HEK293 (cell line): ENCODE measurements at regions of chr7 and their contacts with region 1.

Region 1: DNA sequence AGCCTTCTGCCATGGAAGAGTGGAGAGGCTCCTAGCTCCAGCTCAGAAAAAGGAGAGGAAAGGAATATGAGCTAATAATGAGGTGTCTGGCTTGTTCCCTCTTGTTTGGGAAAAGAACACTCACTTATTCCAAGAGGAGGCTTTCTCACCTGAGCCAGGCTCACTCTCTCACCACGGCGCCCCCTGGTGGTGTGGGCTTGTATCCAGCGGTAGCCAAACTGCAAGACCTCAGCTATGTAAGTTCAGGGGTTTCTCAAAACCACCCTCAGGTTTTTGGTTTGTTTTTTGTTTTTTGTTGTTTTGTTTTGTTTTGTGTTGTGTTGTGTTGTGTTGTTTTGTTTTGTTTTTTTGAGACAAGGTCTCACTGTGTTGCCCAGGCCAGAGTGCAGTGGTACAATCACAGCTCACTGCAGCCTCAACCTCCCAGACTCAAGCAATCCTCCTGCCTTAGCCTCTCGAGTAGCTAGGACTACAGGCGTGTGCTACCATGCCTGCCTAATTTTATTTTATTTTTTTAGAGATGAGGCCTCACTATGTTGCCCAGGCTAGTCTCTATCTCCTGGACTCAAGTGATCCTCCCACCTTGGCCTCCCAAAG is 124.0 kb downstream of the TMEM130 start:
- H3K4me3 ChIP-seq: no peak overlapping the region
- H3K27ac ChIP-seq: no peak overlapping the region
- H3K4me1 ChIP-seq: no peaks in the 10 kb centered on the region
- CTCF ChIP-seq: peak; percentile 72

Region 2: GRCh38 chr7:98434095-98434494 is 311.7 kb before region 1 on chr7:
- CTCF ChIA-PET with region 1: interaction called, 36 read pairs
- POLR2A ChIA-PET with region 1: no interaction called
- H3K4me3 ChIP-seq: no peak overlapping the region
- H3K27ac ChIP-seq: no peak overlapping the region
- H3K4me1 ChIP-seq: no peaks in the 10 kb centered on the region
- CTCF ChIP-seq: no peak

Region 3: DNA sequence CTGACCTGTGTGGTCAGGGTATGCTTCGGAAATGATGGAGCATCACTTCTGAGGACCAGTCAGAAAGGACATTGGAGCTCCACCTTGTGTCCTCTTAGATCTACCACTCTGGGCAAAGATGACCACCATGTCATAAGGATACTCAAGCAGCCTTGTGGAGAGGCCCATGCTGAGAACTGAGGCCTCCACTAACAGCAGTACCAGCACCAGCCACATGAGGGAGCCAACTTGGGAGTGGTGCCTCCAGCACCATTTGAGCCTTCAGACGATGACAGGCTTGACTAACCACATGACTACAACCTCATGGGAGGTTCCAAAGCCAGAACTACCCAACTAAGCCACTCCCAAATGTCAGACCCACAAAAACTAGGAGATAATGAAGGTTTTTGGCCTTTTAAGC is 12.8 kb before region 1 on chr7:
- CTCF ChIA-PET with region 1: interaction called, 25 read pairs
- POLR2A ChIA-PET with region 1: no interaction called
- H3K4me3 ChIP-seq: no peak overlapping the region
- H3K27ac ChIP-seq: no peak overlapping the region
- H3K4me1 ChIP-seq: no peaks in the 10 kb centered on the region
- CTCF ChIP-seq: peak; percentile 50; the same call in 1 of the 2 replicates

Region 4: DNA sequence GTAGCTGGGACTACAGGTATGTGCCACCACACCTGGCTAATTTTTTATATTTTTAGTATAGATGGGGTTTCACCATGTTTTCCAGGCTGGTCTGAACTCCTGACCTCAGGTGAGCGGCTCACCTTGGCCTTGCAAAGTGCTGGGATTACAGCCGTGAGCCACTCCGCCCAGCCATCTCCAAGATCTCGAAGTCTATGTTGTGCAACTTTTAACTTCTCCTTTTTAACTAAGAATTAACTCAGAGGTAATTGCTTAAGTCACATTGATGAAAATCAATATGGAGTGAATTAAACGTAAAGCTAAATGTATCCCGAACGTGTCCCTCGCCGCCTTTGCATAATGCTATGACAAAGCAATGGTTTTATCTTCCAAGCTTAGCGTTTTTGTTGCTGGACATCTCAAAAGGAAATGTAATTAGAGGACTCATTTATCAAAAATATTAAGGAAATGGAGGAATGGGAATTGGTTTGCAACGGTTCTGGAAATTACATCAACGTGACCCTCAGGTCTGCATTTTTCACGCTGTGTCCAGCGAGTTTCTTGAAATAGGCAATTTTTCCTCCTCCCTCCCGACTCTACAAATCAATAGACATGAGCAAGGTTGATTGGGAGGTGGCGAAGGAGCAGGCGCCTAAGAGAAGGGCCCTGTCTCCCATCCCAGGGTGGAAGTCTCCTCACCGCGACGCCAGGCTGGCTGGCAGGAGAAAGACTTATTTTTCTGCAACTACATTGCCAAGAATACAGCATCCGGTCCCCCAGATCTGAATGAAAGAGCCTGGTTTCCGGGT is 34.2 kb after region 1 on chr7:
- CTCF ChIA-PET with region 1: interaction called, 14 read pairs
- POLR2A ChIA-PET with region 1: interaction called, 4 read pairs
- H3K4me3 ChIP-seq: no peak overlapping the region
- H3K27ac ChIP-seq: no peak overlapping the region
- H3K4me1 ChIP-seq: no peaks in the 10 kb centered on the region
- CTCF ChIP-seq: no peak

Region 5: GRCh38 chr7:98841179-98841997 is 95.6 kb after region 1 on chr7:
- CTCF ChIA-PET with region 1: interaction called, 26 read pairs
- POLR2A ChIA-PET with region 1: no interaction called
- H3K4me3 ChIP-seq: no peak overlapping the region
- H3K27ac ChIP-seq: no peak overlapping the region
- H3K4me1 ChIP-seq: peaks cover 13% of the 10 kb centered on the region; the same call in 1 of the 2 replicates
- CTCF ChIP-seq: peak; percentile 97

Region 6: DNA sequence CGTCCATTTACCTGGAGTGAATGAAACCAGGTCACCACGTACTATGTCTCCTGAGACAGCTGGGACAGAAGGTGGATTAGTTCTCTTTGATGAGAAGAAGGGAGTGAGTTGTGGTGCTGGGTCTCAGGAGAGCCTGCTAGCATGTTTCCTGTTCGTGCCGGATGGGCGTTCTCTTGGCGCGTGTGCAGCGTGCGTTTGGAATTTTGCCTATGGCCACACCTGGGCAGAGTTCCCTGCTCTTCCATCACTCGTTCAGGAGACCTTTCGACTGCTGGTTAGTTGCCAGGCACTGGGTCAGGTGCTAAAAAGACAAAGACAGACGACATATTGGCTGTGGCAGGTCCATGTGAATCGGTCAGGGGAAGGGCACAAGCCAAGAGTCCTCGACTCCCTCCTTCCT is 222.8 kb after region 1 on chr7:
- CTCF ChIA-PET with region 1: no interaction called
- POLR2A ChIA-PET with region 1: no interaction called
- H3K4me3 ChIP-seq: no peak overlapping the region
- H3K27ac ChIP-seq: no peak overlapping the region
- H3K4me1 ChIP-seq: no peaks in the 10 kb centered on the region
- CTCF ChIP-seq: no peak